ENCODE measurements at regions of chr15 and their contacts with region 1.

Region 1: DNA sequence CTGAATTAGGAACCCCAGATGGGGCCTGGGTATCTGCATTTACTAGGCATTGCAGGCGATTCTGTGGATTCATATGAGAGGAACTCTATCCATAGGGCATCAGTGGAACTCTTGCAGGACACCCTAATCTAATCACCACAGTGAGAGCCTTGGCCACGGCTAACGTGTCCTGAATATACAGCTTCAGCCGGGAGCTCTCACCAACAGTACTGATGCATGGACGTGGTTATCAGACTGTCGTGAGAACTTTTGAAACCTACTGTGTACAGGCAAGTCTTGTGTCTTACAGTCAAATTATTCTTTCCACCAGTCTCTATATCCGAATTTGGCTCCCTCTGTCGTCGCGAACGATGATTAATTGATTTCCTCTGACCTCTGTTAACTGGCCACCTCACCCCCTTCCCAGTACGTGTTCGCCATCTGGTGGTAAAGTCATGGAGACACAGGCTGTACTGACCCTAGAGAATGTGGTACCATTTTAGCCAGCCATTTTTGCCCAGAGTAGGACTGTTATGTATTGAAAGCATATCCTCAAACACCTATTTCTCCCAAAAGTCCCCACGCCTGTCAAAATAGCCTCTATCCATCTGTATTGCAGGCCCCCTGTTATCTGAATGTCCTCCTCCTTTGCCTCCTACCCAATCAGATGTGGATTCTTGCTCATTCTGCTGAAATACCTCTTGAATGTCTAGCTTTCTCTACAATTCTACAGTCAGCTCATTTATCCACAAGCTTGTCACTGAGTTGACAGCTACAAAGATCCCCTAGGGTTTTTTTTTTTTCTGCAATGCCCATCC is 39.7 kb downstream of the GLDN start:
- DNase-seq: peak; percentile 72 to 78
- ATAC-seq: peak; percentile 90 to 97
- H3K4me3 ChIP-seq: no peak overlapping the region
- H3K27ac ChIP-seq: no peak overlapping the region
- H3K4me1 ChIP-seq: no peaks in the 10 kb centered on the region
- CTCF ChIP-seq: peak; percentile 96
- EP300 ChIP-seq: no peak
- POLR2A ChIP-seq: no peak
- RAD21 ChIP-seq: peak; percentile 97 to 99

Region 2: DNA sequence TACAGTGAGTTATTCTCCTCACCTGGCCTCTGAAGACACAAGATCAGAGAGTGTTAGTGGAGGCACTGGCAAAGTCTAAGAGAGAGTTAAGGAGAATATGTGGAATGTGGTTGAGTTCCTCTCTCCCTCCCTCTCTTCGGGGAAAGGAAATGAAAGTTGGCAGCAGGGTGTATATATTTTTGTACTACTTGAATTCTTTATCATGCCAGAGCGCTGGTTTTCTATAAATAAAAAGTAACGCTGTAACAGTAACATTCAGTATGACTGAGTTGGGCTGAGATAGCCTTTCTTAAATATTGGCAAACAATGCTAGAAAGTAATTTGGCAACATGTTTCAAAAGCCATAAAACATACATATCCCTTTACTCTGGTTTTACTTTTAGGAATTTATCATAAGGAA is 209.0 kb before region 1 on chr15:
- CTCF ChIA-PET with region 1: interaction called, 211 read pairs
- POLR2A ChIA-PET with region 1: no interaction called
- DNase-seq: no peak
- ATAC-seq: no peak
- H3K4me3 ChIP-seq: no peak overlapping the region
- H3K27ac ChIP-seq: no peak overlapping the region
- H3K4me1 ChIP-seq: no peaks in the 10 kb centered on the region
- CTCF ChIP-seq: no peak
- EP300 ChIP-seq: no peak
- POLR2A ChIP-seq: no peak
- RAD21 ChIP-seq: no peak

Region 3: DNA sequence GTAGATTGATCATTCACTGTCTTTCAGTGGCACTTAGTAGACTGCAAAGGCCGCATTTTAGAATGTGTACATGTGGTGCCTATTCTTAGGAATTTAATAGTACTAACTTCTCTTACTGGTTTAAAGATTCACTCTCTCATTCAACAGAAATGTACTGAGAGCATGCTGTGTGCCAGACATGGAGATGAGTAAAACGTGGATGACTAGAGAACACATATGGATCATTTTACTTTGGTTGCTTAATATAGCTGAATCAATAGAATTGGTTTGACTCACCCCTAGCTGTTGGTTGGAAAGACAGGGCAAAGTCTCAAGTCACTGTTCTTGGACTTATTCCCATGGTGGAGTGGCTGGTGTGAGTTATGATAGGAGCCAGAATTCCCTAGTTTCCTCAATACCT is 177.4 kb before region 1 on chr15:
- CTCF ChIA-PET with region 1: interaction called, 18 read pairs
- POLR2A ChIA-PET with region 1: no interaction called
- DNase-seq: peak in 1 of 2 experiments; percentile 19
- ATAC-seq: peak; percentile 51 to 66; a peak in 5 of 6 replicates
- H3K4me3 ChIP-seq: no peak overlapping the region
- H3K27ac ChIP-seq: no peak overlapping the region
- H3K4me1 ChIP-seq: 0 out of 3 replicates have a peak, but pooled peaks cover 12% of the 10 kb centered on the region
- CTCF ChIP-seq: no peak
- EP300 ChIP-seq: no peak
- POLR2A ChIP-seq: no peak
- RAD21 ChIP-seq: no peak

Region 4: GRCh38 chr15:51281368-51281967 is 99.7 kb before region 1 on chr15:
- CTCF ChIA-PET with region 1: interaction called, 228 read pairs
- POLR2A ChIA-PET with region 1: no interaction called
- DNase-seq: peak; percentile 60 to 65
- ATAC-seq: peak; percentile 94 to 99; a peak in 5 of 6 replicates
- H3K4me3 ChIP-seq: no peak overlapping the region
- H3K27ac ChIP-seq: no peak overlapping the region
- H3K4me1 ChIP-seq: no peaks in the 10 kb centered on the region
- CTCF ChIP-seq: peak; percentile 70
- EP300 ChIP-seq: no peak
- POLR2A ChIP-seq: no peak
- RAD21 ChIP-seq: peak; percentile 80 to 85

Region 5: GRCh38 chr15:51312166-51313097 is 68.8 kb before region 1 on chr15:
- CTCF ChIA-PET with region 1: interaction called, 14 read pairs
- POLR2A ChIA-PET with region 1: no interaction called
- DNase-seq: no peak
- ATAC-seq: peak in 1 of 2 experiments; percentile 28; a peak in 1 of 6 replicates
- H3K4me3 ChIP-seq: no peak overlapping the region
- H3K27ac ChIP-seq: peak overlapping the region; percentile 6 to 34; a peak in 2 of 6 replicates
- H3K4me1 ChIP-seq: peaks cover 18% of the 10 kb centered on the region; the same call in 2 of the 3 replicates
- CTCF ChIP-seq: no peak
- EP300 ChIP-seq: no peak
- POLR2A ChIP-seq: no peak
- RAD21 ChIP-seq: no peak